ENCODE measurements at regions of chr17 and their contacts with region 1.

Region 1: DNA sequence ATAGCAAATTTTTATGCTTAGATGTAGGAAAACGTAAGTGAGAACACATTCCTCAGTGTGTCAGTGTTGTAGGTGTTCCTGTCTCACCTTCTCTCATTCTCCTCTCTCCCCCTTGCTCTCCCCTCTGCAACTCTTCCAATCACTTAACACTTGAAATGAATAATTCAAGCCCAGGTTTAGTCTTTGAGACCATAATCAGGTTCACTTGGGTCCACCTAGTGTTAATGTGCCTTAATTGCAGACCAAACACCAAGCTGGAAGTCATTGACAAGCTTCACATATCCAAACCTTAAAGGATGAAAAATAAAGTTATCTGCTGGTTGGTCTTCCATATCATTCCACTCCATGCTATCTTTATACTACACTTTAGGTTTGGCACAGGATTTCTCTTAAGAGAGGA is 37.0 kb downstream of the STXBP4 start:
- DNase-seq: peak in 1 of 2 donors; percentile 18
- ATAC-seq: no peak
- H3K4me3 ChIP-seq: no peak overlapping the region
- H3K4me3 Mint-ChIP-seq: no peak overlapping the region
- H3K27ac ChIP-seq: no peak overlapping the region
- H3K27ac Mint-ChIP-seq: no peak overlapping the region
- H3K4me1 ChIP-seq: no peaks in the 10 kb centered on the region
- H3K4me1 Mint-ChIP-seq: no peaks in the 10 kb centered on the region
- H3K27me3 ChIP-seq: no peaks in the 10 kb centered on the region
- H3K27me3 Mint-ChIP-seq: no peaks in the 10 kb centered on the region
- CTCF ChIP-seq: peak; percentile 10

Region 2: GRCh38 chr17:54795046-54795445 is 210.5 kb before region 1 on chr17:
- intact Hi-C with region 1: no loop called
- DNase-seq: no peak
- ATAC-seq: no peak
- H3K4me3 ChIP-seq: no peak overlapping the region
- H3K4me3 Mint-ChIP-seq: no peak overlapping the region
- H3K27ac ChIP-seq: no peak overlapping the region
- H3K27ac Mint-ChIP-seq: no peak overlapping the region
- H3K4me1 ChIP-seq: no peaks in the 10 kb centered on the region
- H3K4me1 Mint-ChIP-seq: no peaks in the 10 kb centered on the region
- H3K27me3 ChIP-seq: no peaks in the 10 kb centered on the region
- H3K27me3 Mint-ChIP-seq: no peaks in the 10 kb centered on the region
- CTCF ChIP-seq: no peak

Region 3: GRCh38 chr17:55053855-55054254 is 48.3 kb after region 1 on chr17:
- intact Hi-C with region 1: loop called (anchors 10 kb)
- DNase-seq: peak in 1 of 2 donors; percentile 12
- ATAC-seq: no peak
- H3K4me3 ChIP-seq: no peak overlapping the region
- H3K4me3 Mint-ChIP-seq: no peak overlapping the region
- H3K27ac ChIP-seq: no peak overlapping the region
- H3K27ac Mint-ChIP-seq: no peak overlapping the region
- H3K4me1 ChIP-seq: no peaks in the 10 kb centered on the region
- H3K4me1 Mint-ChIP-seq: no peaks in the 10 kb centered on the region
- H3K27me3 ChIP-seq: no peaks in the 10 kb centered on the region
- H3K27me3 Mint-ChIP-seq: no peaks in the 10 kb centered on the region
- CTCF ChIP-seq: no peak